Tibial artery (tissue), 4 donors: ENCODE measurements at regions of chr19 and their contacts with region 1.

Region 1: DNA sequence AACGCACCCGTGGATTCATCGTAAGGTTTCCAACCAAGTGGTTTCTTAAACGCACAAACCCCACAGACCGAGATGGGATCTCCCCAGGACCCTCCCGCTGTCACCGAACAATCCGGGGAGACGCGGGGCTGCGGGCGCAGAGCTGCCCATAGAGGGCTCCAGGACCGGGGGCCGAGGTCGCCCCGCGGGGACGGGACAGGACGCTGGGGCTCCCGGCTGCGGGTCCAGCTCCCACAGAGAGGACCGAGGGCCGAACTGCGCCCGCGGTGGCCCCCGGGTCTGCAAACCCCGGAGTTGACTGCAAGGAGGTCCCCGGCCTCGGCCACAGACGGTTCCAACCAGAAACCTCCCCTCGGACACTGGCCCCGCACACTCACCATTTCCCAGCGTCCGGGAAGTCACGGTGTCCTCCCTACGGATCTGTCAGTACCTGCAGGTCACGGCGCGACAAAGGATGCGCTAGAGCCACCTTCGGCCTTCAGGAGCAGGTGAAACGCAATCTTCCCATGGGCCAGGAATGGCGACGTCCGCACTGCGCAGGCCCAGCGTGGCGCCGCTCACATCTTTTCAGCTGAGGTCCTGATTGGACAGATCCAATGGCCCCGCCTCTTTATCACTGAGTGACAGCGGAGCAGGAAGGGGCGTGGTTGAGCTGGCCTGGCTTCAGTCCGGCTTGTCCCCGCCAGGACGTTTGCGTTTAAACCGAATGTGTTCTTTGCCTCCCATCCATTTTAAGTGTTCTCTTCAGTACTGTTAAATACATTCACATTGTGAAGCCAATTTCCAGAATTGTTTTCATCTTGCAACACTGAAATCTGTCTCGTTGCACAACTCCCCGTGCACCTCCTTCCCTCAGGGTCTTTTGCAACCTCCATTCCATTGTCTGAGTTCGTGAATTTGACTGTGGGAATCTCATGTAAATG is at the start of gene ZNF14:
- DNase-seq: peak; percentile 96
- H3K4me3 ChIP-seq: peak within 1 kb of the TSS; percentile 75
- H3K27ac ChIP-seq: peak within 1 kb of the TSS; percentile 72 to 81
- H3K4me1 ChIP-seq: peaks cover 0 to 13% (median 5%) of the 10 kb centered on the region in 4 donors
- H3K27me3 ChIP-seq: no peaks in the 10 kb centered on the region
- CTCF ChIP-seq: no peak

Region 2: DNA sequence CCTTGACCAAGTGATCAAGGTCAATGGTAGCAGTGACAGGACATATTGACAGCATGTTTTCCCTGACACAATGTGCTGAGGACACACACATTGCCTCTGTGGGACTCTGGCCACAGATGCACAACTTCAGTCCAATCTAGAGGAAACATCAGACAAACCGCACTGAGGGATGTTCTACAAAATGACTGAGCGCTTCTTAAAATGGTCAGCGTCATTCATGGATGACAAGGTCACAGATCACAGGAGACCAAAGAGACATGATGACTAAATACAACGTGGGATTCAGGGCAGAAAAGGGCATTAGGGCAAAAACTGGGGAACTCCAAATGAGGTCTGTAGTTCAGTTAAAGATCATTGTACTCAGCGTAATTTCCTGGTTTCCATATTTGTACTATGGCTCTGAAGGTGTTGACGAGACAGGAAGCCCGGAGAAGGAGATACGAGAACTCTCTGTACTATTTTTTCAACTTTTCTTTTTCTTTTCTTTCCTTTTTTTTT is 135.0 kb before region 1 on chr19:
- intact Hi-C with region 1: no loop called
- DNase-seq: no peak
- H3K4me3 ChIP-seq: no peak overlapping the region
- H3K27ac ChIP-seq: no peak overlapping the region
- H3K4me1 ChIP-seq: no peaks in the 10 kb centered on the region
- H3K27me3 ChIP-seq: no peaks in the 10 kb centered on the region
- CTCF ChIP-seq: no peak

Region 3: GRCh38 chr19:19668230-19669012 is 64.4 kb before region 1 on chr19 and contains the start of gene ZNF101:
- intact Hi-C with region 1: loop called (anchors 5 kb)
- DNase-seq: peak; percentile 91 to 96
- H3K4me3 ChIP-seq: peak within 1 kb of the TSS; percentile 82 to 83
- H3K27ac ChIP-seq: peak within 1 kb of the TSS; percentile 64 to 83
- H3K4me1 ChIP-seq: peaks cover 0 to 18% (median 10%) of the 10 kb centered on the region in 4 donors
- H3K27me3 ChIP-seq: no peaks in the 10 kb centered on the region
- CTCF ChIP-seq: no peak